ENCODE measurements at regions of chr19 and their contacts with region 1.

Region 1: GRCh38 chr19:28324275-28325060 is 888.5 kb downstream of the UQCRFS1 start:
- H3K4me3 ChIP-seq: no peak overlapping the region
- H3K27ac ChIP-seq: no peak overlapping the region
- H3K4me1 ChIP-seq: peaks cover 9% of the 10 kb centered on the region
- CTCF ChIP-seq: peak; percentile 54

Region 2: GRCh38 chr19:28217022-28217421 is 107.4 kb before region 1 on chr19:
- CTCF ChIA-PET with region 1: interaction called, 12 read pairs
- POLR2A ChIA-PET with region 1: no interaction called
- H3K4me3 ChIP-seq: no peak overlapping the region
- H3K27ac ChIP-seq: no peak overlapping the region
- H3K4me1 ChIP-seq: no peaks in the 10 kb centered on the region; the same call in 1 of the 2 replicates
- CTCF ChIP-seq: peak; percentile 77

Region 3: GRCh38 chr19:28307487-28307886 is 17.0 kb before region 1 on chr19:
- CTCF ChIA-PET with region 1: interaction called, 56 read pairs
- POLR2A ChIA-PET with region 1: interaction called, 3 read pairs
- H3K4me3 ChIP-seq: no peak overlapping the region
- H3K27ac ChIP-seq: no peak overlapping the region
- H3K4me1 ChIP-seq: no peaks in the 10 kb centered on the region
- CTCF ChIP-seq: no peak

Region 4: DNA sequence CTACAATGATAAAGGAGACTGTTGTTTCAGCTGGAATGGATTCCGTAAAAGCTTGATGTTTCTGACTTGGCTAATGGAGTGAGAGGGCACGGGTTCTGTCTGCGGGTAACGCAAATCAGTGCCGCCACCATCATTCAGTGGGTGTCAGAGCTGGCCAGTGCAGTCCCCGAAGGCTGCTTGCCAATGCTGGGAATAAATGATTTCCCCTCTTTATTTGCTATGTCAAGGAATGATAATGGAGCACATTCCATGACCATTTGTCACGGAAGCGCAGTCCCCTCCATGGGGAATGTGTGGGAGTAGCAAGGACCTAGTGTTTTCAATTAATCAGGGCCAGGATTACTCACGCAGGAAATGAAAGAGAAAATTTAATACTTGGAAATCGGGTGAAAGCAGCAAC is 10.8 kb before region 1 on chr19:
- CTCF ChIA-PET with region 1: interaction called, 56 read pairs
- POLR2A ChIA-PET with region 1: no interaction called
- H3K4me3 ChIP-seq: no peak overlapping the region
- H3K27ac ChIP-seq: no peak overlapping the region
- H3K4me1 ChIP-seq: peaks cover 10% of the 10 kb centered on the region
- CTCF ChIP-seq: no peak

Region 5: DNA sequence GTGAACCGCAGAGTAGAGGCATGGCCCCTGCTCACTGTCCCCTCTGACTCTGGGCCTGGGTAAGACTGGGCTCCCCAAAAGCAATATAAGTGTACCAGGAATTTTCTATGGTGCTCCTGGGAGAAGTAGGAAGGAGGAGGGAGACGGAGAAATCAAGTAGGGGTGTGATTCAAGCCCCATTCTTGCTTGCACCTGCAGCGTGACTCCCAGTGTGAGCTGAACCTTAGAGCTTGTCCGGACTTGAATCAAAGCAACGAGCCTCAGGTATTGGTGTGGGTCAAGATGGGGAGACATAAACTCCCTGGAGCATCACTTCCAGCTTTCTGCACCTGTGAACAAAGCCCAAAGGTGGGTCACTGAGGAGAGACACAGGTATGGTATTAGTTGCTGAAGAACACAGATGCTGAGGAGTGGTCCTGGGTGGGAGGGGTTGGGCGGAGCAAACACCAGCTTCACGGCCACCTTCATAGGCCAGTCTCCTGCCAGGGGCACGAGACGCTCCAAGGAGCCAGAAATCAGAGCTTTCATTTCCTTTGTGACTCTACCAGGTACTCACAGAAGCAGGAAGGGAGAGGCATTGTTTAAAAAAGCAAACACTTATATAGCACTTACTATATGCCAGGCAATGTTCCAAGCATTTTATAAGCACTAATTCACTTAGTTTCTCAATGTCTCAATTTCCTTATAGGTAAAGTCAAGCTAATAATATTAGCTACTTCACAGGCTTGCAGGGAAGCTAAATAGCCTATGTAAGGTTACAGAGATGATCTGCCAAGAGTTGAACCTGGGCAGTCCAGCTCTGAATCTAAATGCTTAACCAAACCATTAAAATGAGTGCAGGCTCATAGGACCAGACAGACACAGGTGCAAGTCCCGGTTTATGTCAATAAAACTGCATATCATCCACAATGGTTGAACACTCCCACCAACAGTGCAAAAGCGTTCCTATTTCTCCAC is 113.2 kb after region 1 on chr19:
- CTCF ChIA-PET with region 1: no interaction called
- POLR2A ChIA-PET with region 1: no interaction called
- H3K4me3 ChIP-seq: no peak overlapping the region
- H3K27ac ChIP-seq: no peak overlapping the region
- H3K4me1 ChIP-seq: peaks cover 2% of the 10 kb centered on the region; the same call in 1 of the 2 replicates
- CTCF ChIP-seq: no peak

Measured in HEK293 (cell line).